ENCODE measurements at regions of chr1 and their contacts with region 1.

Region 1: GRCh38 chr1:232635778-232636356 is 5.9 kb upstream of the SIPA1L2 start:
- DNase-seq: no peak
- ATAC-seq: peak; percentile 63
- H3K4me3 ChIP-seq: no peak overlapping the region
- H3K4me1 ChIP-seq: peaks cover 22% of the 10 kb centered on the region
- CTCF ChIP-seq: peak; percentile 52

Region 2: GRCh38 chr1:232578651-232579195 is 57.1 kb before region 1 on chr1:
- intact Hi-C with region 1: no loop called
- DNase-seq: no peak
- ATAC-seq: peak; percentile 52
- H3K4me3 ChIP-seq: no peak overlapping the region
- H3K4me1 ChIP-seq: no peaks in the 10 kb centered on the region
- CTCF ChIP-seq: no peak

Region 3: DNA sequence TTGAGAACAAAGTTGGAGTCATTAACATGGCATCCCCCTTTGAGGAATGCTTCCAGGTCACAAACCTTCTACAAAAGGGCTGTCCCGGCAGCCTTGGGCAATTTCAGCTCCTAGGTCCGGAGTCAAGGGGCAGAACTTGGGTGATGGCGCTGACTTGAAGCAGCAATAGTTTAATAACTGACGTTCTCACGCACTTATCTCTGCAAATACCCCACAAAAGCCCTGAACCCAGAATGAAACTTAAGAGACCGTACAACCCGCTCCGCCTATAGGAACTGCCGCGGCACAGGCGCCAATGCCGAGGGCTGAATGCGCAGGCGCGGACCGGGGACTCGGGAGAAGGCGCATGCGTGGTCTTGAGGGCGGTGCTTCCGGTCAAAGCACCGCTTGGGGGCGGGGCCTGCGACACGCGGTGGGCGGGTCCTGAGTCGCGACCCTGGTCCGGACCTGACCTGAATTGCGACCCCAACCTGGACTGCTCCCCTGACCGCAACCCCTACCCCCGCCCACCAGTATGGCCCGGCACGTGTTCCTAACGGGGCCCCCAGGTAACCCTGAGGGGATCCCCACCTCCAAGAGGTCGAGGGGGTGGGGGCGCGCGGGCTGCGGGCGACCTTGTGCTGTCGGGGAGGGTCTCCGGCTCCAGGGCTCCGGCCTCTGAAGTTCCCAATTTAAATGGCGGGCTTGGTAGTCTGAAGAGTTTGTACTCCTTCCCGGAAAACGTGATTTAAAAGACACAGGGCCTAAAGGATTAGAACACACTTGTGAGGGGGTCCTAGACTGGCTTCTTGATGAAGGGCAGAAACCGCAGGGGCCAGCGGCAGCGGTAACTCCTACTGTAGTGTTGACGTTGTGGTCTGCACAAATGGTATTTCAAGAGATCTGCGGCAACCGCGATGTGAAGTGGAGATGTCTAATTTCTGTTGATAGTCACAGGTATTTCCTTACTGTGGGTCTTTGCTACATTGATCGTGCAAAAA is 314.6 kb after region 1 on chr1 and contains the start of gene NTPCR:
- intact Hi-C with region 1: loop called in 1 of 2 experiments (anchors 5 kb)
- DNase-seq: peak; percentile 95 to 98 (median 96)
- ATAC-seq: peak; percentile 96
- H3K4me3 ChIP-seq: peak within 1 kb of the TSS; percentile 82
- H3K4me1 ChIP-seq: peaks cover 24% of the 10 kb centered on the region
- CTCF ChIP-seq: no peak
- total RNA-seq, gene NTPCR: 36.5 to 49.9 (median 46.4) TPM

Measured in mucosa of descending colon (tissue), 3 donors.